ENCODE measurements at regions of chr1 and their contacts with region 1.

Region 1: DNA sequence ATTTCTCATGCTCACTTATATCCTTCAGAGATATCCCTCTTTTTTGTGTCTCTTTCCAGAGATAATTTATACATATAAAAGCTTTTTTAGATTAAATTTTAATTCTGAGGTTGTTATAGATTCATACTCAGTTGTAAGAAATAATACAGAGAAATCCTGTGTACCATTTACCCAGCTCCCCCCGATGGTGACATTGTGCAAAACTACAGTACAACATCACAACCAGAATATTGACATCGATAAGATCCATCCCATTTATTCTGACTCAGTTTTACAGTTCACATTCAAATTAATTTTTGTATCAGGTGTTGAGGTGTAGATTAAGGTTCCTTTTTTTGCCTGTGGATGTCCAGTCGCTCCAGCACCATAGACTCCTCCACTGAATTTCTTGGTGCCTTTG is 14.3 kb downstream of the DMRTB1 start:
- DNase-seq: peak; percentile 21
- H3K4me3 Mint-ChIP-seq: no peak overlapping the region
- H3K27ac Mint-ChIP-seq: no peak overlapping the region
- H3K4me1 Mint-ChIP-seq: no peaks in the 10 kb centered on the region
- H3K27me3 Mint-ChIP-seq: no peaks in the 10 kb centered on the region

Region 2: GRCh38 chr1:53278201-53278725 is 195.2 kb before region 1 on chr1:
- CTCF ChIA-PET with region 1: no interaction called
- intact Hi-C with region 1: loop called (anchors 1 kb)
- DNase-seq: peak; percentile 79
- H3K4me3 Mint-ChIP-seq: no peak overlapping the region
- H3K27ac Mint-ChIP-seq: no peak overlapping the region
- H3K4me1 Mint-ChIP-seq: peaks cover 2% of the 10 kb centered on the region
- H3K27me3 Mint-ChIP-seq: no peaks in the 10 kb centered on the region

Region 3: GRCh38 chr1:53450225-53450624 is 23.2 kb before region 1 on chr1:
- CTCF ChIA-PET with region 1: interaction called, 3 read pairs
- intact Hi-C with region 1: loop called (anchors 2 kb)
- DNase-seq: no peak
- H3K4me3 Mint-ChIP-seq: no peak overlapping the region
- H3K27ac Mint-ChIP-seq: no peak overlapping the region
- H3K4me1 Mint-ChIP-seq: no peaks in the 10 kb centered on the region
- H3K27me3 Mint-ChIP-seq: peaks cover 2% of the 10 kb centered on the region

Region 4: GRCh38 chr1:53644909-53645689 is 171.6 kb after region 1 on chr1:
- CTCF ChIA-PET with region 1: no interaction called
- intact Hi-C with region 1: no loop called
- DNase-seq: no peak
- H3K4me3 Mint-ChIP-seq: no peak overlapping the region
- H3K27ac Mint-ChIP-seq: no peak overlapping the region
- H3K4me1 Mint-ChIP-seq: no peaks in the 10 kb centered on the region
- H3K27me3 Mint-ChIP-seq: peaks cover 3% of the 10 kb centered on the region